Prostate gland (tissue), 2 donors: ENCODE measurements at regions of chr6 and their contacts with region 1.

Region 1: DNA sequence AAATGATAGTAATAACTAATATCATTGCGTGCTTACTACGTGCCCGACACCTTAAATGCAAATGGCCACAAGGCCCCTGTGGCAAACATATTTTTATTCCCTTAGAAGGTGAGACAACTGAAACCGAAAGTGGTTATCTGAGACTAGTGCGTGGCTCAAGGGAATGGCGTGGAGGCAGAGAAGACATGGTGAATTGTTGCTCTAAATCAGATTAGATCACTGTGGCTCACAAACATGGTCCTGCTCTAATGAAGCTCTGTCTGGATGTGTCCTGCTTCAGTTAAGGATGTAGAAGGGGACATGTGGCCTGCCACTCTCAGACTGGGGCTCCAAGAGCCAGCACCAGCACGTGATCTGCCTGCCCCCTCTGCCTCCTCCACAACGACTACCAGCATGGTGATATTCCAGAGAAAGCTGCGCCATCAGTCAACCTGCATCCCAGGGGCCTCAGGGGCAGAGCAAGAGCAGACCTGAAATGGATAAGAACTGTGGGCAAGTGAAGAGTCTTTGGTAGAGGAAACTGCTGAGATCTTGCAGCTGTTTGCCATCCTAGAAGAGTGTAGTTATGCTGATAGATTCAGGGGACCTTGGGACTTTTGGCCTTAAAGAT is 124.3 kb upstream of the GMDS start:
- DNase-seq: no peak
- H3K4me3 ChIP-seq: no peak overlapping the region
- H3K27ac ChIP-seq: no peak overlapping the region
- H3K4me1 ChIP-seq: no peaks in the 10 kb centered on the region
- H3K27me3 ChIP-seq: no peaks in the 10 kb centered on the region
- CTCF ChIP-seq: no peak
- POLR2A ChIP-seq: no peak

Region 2: GRCh38 chr6:2285510-2285909 is 84.2 kb before region 1 on chr6:
- intact Hi-C with region 1: no loop called
- DNase-seq: no peak
- H3K4me3 ChIP-seq: no peak overlapping the region
- H3K27ac ChIP-seq: no peak overlapping the region
- H3K4me1 ChIP-seq: no peaks in the 10 kb centered on the region
- H3K27me3 ChIP-seq: no peaks in the 10 kb centered on the region
- CTCF ChIP-seq: no peak
- POLR2A ChIP-seq: no peak

Region 3: GRCh38 chr6:2344319-2344905 is 25.3 kb before region 1 on chr6:
- intact Hi-C with region 1: loop called (anchors 2 kb)
- DNase-seq: no peak
- H3K4me3 ChIP-seq: no peak overlapping the region
- H3K27ac ChIP-seq: no peak overlapping the region
- H3K4me1 ChIP-seq: no peaks in the 10 kb centered on the region
- H3K27me3 ChIP-seq: no peaks in the 10 kb centered on the region
- CTCF ChIP-seq: no peak
- POLR2A ChIP-seq: no peak

Region 4: DNA sequence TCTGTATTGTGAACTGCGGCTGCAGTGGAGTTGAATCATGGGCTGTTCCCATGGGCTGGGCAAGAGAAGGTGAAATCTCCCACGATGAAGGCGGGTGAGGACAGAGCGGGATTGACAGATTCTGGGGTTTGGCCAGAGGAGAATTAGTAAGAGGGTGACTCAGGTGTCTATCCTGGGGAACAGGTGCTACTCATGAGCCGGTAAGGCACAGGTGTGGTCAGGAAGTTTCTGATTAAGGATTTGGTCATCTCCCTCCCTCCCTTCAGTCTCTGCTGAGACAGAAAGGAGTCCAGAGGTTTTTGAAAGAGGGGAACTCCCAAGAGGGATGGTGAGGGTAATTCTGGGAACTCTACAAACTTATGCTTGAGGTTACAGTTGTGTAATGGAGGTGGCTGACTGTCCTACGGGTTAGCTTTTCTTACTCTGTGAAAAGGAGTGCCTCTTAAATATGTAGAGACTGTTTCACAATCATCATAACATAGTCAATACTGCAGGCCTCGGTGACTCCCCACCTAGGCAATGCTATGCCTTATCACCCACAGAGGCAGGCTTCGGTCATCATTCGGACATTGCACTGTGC is 440.5 kb after region 1 on chr6:
- intact Hi-C with region 1: no loop called
- DNase-seq: no peak
- H3K4me3 ChIP-seq: no peak overlapping the region
- H3K27ac ChIP-seq: no peak overlapping the region
- H3K4me1 ChIP-seq: no peaks in the 10 kb centered on the region
- H3K27me3 ChIP-seq: no peaks in the 10 kb centered on the region
- CTCF ChIP-seq: no peak
- POLR2A ChIP-seq: no peak

Region 5: GRCh38 chr6:2853761-2854395 is 484.2 kb after region 1 on chr6:
- intact Hi-C with region 1: no loop called
- DNase-seq: peak; percentile 23
- H3K4me3 ChIP-seq: peak overlapping the region; percentile 20 to 22
- H3K27ac ChIP-seq: peak overlapping the region; percentile 21 to 57
- H3K4me1 ChIP-seq: no peaks in the 10 kb centered on the region
- H3K27me3 ChIP-seq: no peaks in the 10 kb centered on the region
- CTCF ChIP-seq: peak; percentile 22 to 54 (median 35)
- POLR2A ChIP-seq: no peak